Mammary epithelial cell (primary cell): ENCODE measurements at regions of chrX and their contacts with region 1.

Region 1: GRCh38 chrX:130975947-130976346 is 72.9 kb upstream of the ENOX2 start:
- DNase-seq: peak; percentile 30
- H3K4me3 ChIP-seq: no peak overlapping the region
- H3K27ac ChIP-seq: no peak overlapping the region
- H3K4me1 ChIP-seq: no peaks in the 10 kb centered on the region
- H3K27me3 ChIP-seq: no peaks in the 10 kb centered on the region
- CTCF ChIP-seq: peak; percentile 66 to 68

Region 2: GRCh38 chrX:131053076-131053475 is 77.1 kb after region 1 on chrX:
- CTCF ChIA-PET with region 1: no interaction called
- dilution Hi-C with region 1: no loop called
- in situ Hi-C with region 1: no loop called
- intact Hi-C with region 1: no loop called
- DNase-seq: no peak
- H3K4me3 ChIP-seq: no peak overlapping the region
- H3K27ac ChIP-seq: no peak overlapping the region
- H3K4me1 ChIP-seq: no peaks in the 10 kb centered on the region
- H3K27me3 ChIP-seq: peaks cover 4% of the 10 kb centered on the region
- CTCF ChIP-seq: no peak

Region 3: GRCh38 chrX:131063613-131064012 is 87.7 kb after region 1 on chrX:
- CTCF ChIA-PET with region 1: no interaction called
- dilution Hi-C with region 1: no loop called
- in situ Hi-C with region 1: no loop called
- intact Hi-C with region 1: no loop called
- DNase-seq: no peak
- H3K4me3 ChIP-seq: no peak overlapping the region
- H3K27ac ChIP-seq: no peak overlapping the region
- H3K4me1 ChIP-seq: no peaks in the 10 kb centered on the region
- H3K27me3 ChIP-seq: peaks cover 4% of the 10 kb centered on the region
- CTCF ChIP-seq: no peak

Region 4: DNA sequence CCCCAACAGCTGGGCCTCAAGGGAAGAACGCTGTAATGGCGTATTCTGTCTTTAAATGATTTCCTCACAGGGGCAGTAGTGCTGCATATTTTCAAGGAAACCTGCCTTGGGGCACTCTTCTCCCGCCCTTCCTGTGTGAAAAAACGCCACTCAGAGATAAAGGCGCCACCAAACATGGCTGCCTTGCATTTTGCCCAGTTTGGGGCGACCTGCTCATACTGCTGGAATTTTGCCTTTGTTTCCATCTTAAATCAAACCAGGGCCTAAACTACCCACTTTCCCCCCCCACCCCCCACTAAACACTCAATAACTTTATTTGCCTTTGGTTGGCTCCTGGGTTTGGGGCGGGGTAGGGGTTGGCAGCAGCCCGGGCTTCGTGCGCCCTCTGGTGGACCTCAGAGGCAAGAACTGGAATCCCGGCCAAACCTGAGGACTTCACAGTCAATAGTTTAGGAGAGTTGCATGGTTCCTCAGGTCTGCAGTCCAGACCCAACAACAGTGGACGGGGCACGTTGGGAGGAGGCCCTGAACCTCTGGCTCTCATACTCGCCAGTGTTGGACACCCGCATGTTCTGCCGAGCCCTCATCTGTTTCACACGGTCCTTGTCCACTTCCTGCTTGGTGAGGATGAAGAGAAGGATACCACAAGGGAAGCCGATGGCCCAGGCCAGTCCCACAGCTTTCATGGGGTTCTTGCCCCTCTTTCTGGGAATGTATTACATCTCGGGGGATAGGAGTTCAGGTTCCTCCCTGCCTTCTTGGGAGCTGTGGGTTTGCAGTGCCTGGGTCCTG is 827.1 kb after region 1 on chrX:
- CTCF ChIA-PET with region 1: no interaction called
- dilution Hi-C with region 1: no loop called
- in situ Hi-C with region 1: no loop called
- intact Hi-C with region 1: loop called (anchors 5 kb)
- DNase-seq: peak; percentile 55
- H3K4me3 ChIP-seq: peak overlapping the region in 2 of 3 experiments; percentile 20 to 51
- H3K27ac ChIP-seq: no peak overlapping the region
- H3K4me1 ChIP-seq: no peaks in the 10 kb centered on the region
- H3K27me3 ChIP-seq: no peaks in the 10 kb centered on the region
- CTCF ChIP-seq: peak; percentile 33 to 72